Activated CD8-positive, alpha-beta T cell treated with anti-CD3 and anti-CD28 coated beads for 36 hours (primary cell): ENCODE measurements at regions of chr9 and their contacts with region 1.

Region 1: GRCh38 chr9:19464764-19465585 is 56.2 kb downstream of the ACER2 start:
- DNase-seq: peak; percentile 81
- ATAC-seq: peak; percentile 89
- H3K4me3 Mint-ChIP-seq: peak overlapping the region; percentile 78
- H3K27ac Mint-ChIP-seq: no peak overlapping the region
- H3K4me1 Mint-ChIP-seq: peaks cover 6% of the 10 kb centered on the region
- H3K27me3 Mint-ChIP-seq: no peaks in the 10 kb centered on the region
- CTCF ChIP-seq: peak; percentile 92

Region 2: DNA sequence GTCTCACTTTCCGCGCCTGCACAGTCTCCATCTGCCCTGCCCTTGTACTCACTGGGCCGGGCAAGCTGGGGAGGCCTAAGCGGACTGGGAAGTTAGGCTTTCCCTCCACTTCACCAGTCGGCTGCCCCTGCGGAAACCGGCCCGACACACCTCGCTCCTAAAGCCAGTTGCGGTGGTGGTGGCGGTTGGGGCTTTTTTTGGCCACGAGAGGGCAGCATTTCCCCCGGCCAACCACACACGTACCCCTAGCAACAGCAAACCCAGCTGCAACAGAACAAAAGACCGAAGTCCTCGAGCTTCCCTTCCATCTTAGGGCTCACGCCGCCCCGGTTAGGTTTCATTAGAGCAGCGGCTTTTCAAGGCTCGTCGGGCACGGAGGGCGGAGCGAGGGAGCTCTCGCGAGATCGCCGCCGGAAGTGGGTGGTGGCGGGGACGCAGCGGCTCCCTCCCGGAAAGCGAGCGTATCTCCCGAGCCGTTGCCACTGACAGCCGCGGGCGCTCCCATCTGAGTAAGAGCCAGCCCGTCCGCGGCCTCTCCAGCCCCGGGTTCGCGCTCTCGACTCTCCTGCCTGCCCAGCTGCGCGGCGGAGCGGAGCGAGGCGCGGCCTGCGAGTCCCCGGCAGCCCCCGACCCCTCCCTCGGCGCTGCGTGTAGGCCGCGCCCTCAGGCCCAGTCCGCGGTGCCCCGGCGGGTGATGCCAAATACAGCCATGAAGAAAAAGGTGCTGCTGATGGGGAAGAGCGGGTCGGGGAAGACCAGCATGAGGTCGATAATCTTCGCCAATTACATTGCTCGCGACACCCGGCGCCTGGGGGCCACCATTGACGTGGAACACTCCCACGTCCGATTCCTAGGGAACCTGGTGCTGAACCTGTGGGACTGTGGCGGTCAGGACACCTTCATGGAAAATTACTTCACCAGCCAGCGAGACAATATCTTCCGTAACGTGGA is 415.7 kb before region 1 on chr9 and contains the start of gene RRAGA:
- CTCF ChIA-PET with region 1: interaction called, 18 read pairs
- POLR2A ChIA-PET with region 1: interaction called, 3 read pairs
- intact Hi-C with region 1: no loop called
- DNase-seq: peak; percentile 96
- ATAC-seq: peak; percentile 93
- H3K4me3 Mint-ChIP-seq: peak within 1 kb of the TSS; percentile 98
- H3K27ac Mint-ChIP-seq: peak within 1 kb of the TSS; percentile 97
- H3K4me1 Mint-ChIP-seq: peaks cover 26% of the 10 kb centered on the region
- H3K27me3 Mint-ChIP-seq: no peaks in the 10 kb centered on the region
- CTCF ChIP-seq: peak; percentile 71
- total RNA-seq, gene RRAGA: 53.6 to 56.3 TPM

Region 3: DNA sequence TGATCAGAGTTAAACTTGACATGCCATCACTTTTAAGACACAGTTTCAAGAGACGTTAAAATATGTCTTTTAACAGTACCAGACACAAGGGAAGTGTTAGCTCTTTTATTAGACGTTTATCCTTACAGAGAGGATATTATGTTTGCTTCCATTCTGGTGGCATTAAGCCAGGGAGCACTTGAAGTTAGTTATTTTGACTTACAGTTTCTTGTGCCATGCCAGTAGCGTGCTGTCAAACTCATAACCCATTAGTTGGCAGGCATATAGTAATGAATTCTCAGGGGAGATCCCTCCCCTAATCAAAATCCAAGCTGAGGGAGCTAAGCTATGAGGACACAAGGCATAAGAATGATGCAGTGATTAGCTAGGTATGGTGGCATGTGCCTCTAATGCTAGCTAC is 151.4 kb before region 1 on chr9:
- CTCF ChIA-PET with region 1: no interaction called
- POLR2A ChIA-PET with region 1: no interaction called
- intact Hi-C with region 1: no loop called
- DNase-seq: no peak
- ATAC-seq: no peak
- H3K4me3 Mint-ChIP-seq: no peak overlapping the region
- H3K27ac Mint-ChIP-seq: no peak overlapping the region
- H3K4me1 Mint-ChIP-seq: no peaks in the 10 kb centered on the region
- H3K27me3 Mint-ChIP-seq: no peaks in the 10 kb centered on the region
- CTCF ChIP-seq: no peak

Region 4: DNA sequence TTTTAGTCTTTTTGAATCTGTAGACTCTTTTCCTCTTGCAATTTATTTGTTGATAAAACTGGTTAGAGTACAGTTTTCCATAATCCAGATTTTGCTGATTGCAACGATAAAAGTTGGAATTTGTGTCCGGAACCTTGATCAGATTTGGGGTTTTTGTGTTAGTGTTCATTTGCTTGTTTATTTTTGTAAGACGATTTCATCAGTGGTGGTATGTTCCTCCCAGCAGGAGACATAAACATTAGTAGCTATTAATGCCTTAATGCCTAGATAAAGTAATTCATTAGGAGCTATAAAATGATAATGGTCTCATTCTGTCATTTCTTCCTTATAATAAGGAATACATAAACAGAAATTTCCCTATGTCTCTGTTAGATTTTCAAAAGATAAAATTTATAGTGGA is 106.3 kb before region 1 on chr9:
- CTCF ChIA-PET with region 1: interaction called, 25 read pairs
- POLR2A ChIA-PET with region 1: no interaction called
- intact Hi-C with region 1: no loop called
- DNase-seq: no peak
- ATAC-seq: no peak
- H3K4me3 Mint-ChIP-seq: no peak overlapping the region
- H3K27ac Mint-ChIP-seq: no peak overlapping the region
- H3K4me1 Mint-ChIP-seq: no peaks in the 10 kb centered on the region
- H3K27me3 Mint-ChIP-seq: no peaks in the 10 kb centered on the region
- CTCF ChIP-seq: no peak

Region 5: DNA sequence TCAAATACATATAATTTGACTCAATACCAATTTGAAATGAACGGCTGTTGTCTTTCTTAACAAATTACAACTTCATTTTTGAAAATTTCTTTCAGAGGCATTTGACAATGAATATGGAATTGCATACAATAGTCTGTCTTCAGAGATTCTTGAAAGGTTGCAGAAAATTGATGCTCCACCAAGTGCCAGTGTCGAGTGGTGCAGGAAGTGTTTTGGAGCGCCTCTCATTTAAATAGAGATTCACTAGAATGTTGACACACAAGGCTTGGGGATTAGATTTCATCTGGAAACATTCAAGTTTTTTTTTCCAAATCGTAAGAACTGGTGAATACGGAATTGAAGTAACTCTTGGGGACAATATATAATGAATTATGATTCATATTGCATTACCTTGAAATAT is 93.0 kb before region 1 on chr9:
- CTCF ChIA-PET with region 1: interaction called, 25 read pairs
- POLR2A ChIA-PET with region 1: interaction called, 3 read pairs
- intact Hi-C with region 1: no loop called
- DNase-seq: peak; percentile 12
- ATAC-seq: no peak
- H3K4me3 Mint-ChIP-seq: no peak overlapping the region
- H3K27ac Mint-ChIP-seq: no peak overlapping the region
- H3K4me1 Mint-ChIP-seq: peaks cover 17% of the 10 kb centered on the region
- H3K27me3 Mint-ChIP-seq: no peaks in the 10 kb centered on the region
- CTCF ChIP-seq: no peak

Region 6: GRCh38 chr9:19441730-19442129 is 23.2 kb before region 1 on chr9:
- CTCF ChIA-PET with region 1: interaction called, 23 read pairs
- POLR2A ChIA-PET with region 1: no interaction called
- intact Hi-C with region 1: no loop called
- DNase-seq: no peak
- ATAC-seq: peak; percentile 74
- H3K4me3 Mint-ChIP-seq: peak overlapping the region; percentile 57
- H3K27ac Mint-ChIP-seq: peak overlapping the region; percentile 64
- H3K4me1 Mint-ChIP-seq: peaks cover 10% of the 10 kb centered on the region
- H3K27me3 Mint-ChIP-seq: no peaks in the 10 kb centered on the region
- CTCF ChIP-seq: no peak

Region 7: GRCh38 chr9:19481971-19482404 is 17.0 kb after region 1 on chr9:
- CTCF ChIA-PET with region 1: interaction called, 37 read pairs
- POLR2A ChIA-PET with region 1: interaction called, 3 read pairs
- intact Hi-C with region 1: no loop called
- DNase-seq: no peak
- ATAC-seq: no peak
- H3K4me3 Mint-ChIP-seq: no peak overlapping the region
- H3K27ac Mint-ChIP-seq: no peak overlapping the region
- H3K4me1 Mint-ChIP-seq: no peaks in the 10 kb centered on the region
- H3K27me3 Mint-ChIP-seq: peaks cover 7% of the 10 kb centered on the region
- CTCF ChIP-seq: no peak

Region 8: DNA sequence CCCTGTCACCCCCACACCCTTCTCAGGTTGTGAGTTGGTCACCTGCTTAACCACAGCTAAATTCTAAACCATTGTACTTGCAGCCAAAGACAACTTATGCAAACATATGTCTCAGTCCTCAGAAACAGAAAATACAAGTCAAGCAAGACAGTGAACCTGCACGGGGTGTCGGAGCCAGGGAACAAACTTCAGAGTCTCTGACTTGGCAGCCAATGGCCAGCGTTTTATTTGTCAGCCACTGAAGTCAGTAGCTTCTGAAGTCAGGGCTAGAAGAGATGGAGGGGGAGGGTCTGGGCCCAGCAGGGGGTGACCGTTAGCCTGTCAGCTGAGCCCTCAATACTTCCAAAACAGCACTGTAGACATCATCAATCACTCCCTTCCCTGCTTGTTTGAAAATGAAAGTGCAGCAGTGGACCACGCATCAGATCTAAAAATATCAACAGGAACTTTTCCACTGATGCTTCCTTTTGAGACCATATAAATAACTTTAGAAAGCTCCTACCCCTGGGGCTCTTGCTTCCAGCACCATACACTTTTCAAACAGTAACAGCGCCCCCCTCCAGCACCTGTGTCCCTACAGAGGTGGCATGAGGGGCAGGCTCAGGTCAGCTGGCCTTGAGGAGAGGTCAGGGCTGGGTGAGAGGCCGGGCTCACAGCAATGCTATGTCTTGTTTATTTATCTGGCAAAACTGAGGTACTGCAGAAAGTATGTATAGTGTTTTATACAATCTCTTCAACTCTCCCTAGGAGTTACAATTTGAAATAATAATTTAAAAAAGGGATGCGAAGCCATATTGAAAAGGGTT is 86.4 kb after region 1 on chr9:
- CTCF ChIA-PET with region 1: no interaction called
- POLR2A ChIA-PET with region 1: no interaction called
- intact Hi-C with region 1: no loop called
- DNase-seq: peak; percentile 7
- ATAC-seq: no peak
- H3K4me3 Mint-ChIP-seq: no peak overlapping the region
- H3K27ac Mint-ChIP-seq: no peak overlapping the region
- H3K4me1 Mint-ChIP-seq: no peaks in the 10 kb centered on the region
- H3K27me3 Mint-ChIP-seq: peaks cover 11% of the 10 kb centered on the region
- CTCF ChIP-seq: no peak

Region 9: GRCh38 chr9:19875291-19875920 is 410.4 kb after region 1 on chr9:
- CTCF ChIA-PET with region 1: no interaction called
- POLR2A ChIA-PET with region 1: no interaction called
- intact Hi-C with region 1: no loop called
- DNase-seq: no peak
- ATAC-seq: no peak
- H3K4me3 Mint-ChIP-seq: no peak overlapping the region
- H3K27ac Mint-ChIP-seq: no peak overlapping the region
- H3K4me1 Mint-ChIP-seq: no peaks in the 10 kb centered on the region
- H3K27me3 Mint-ChIP-seq: peaks cover 6% of the 10 kb centered on the region
- CTCF ChIP-seq: no peak